ENCODE measurements at regions of chr6 and their contacts with region 1.

Region 1: DNA sequence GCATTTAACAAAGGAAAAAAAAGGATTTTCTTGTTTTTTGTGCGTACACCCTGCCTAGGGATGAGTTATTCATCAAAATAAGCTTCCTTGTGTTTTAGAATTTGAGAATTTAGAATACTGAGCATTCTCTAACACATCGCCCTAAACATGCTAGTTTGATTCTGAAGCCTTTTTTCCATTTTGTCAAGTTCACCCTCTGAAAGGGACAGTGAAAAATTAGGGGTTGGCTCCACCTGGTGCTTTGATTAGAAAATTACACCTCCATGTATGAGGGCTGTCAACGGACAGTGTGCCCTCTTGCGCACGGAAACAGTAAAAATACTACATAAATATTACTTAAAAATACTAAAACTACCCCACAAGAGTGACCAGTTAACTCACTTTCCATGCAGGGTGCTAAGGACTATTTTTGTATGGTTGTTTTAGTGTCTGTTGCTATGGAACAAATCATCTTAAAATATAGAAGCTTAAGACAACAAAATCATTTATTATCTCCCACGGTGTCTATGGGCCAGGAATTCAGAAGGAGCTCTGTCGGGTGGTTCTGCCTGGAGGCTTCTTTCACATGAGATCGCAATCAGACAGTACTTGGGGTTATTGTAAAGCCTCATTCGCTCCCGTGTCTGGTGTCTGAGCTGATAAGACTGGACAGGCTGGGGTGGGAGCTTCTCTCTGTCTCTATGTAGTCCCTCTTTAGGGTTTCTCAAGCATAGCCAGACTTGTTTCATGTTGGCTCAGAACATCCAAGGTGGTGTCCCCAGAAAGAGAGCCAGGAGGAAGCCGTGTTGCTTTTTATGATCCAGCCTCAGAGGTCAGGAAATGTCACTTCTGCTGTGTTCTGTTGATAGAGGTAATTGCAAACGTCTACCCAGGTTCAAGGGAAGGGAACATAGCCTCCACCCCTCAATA is 41.1 kb upstream of the TMEM170B start:
- DNase-seq: peak; percentile 55
- H3K4me3 Mint-ChIP-seq: no peak overlapping the region
- H3K27ac Mint-ChIP-seq: no peak overlapping the region
- H3K4me1 Mint-ChIP-seq: peaks cover 3% of the 10 kb centered on the region
- H3K27me3 Mint-ChIP-seq: no peaks in the 10 kb centered on the region

Region 2: DNA sequence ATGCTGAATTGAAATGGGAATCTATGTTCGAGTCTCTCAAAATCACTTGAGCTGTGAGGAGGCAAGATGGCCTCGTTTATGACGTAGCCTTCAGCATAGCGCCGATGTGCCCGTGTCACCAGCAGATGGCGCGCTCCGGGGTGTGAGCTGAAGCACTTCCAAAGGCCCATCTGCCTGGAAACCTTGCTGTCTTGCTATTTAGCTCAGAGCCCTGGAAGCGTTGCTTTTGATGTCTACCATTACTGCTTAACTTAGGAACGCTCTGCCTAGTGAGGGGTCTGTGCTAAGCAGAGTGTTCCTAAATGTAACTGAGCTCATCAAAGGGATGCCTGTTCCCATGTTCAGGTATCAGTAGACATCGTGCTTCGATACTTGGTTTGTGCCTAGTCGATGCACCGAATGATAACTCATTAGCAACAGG is 541.8 kb before region 1 on chr6:
- intact Hi-C with region 1: loop called (anchors 1 kb)
- DNase-seq: peak; percentile 51
- H3K4me3 Mint-ChIP-seq: no peak overlapping the region
- H3K27ac Mint-ChIP-seq: no peak overlapping the region
- H3K4me1 Mint-ChIP-seq: no peaks in the 10 kb centered on the region
- H3K27me3 Mint-ChIP-seq: peaks cover 10% of the 10 kb centered on the region

Region 3: GRCh38 chr6:11144393-11144851 is 352.0 kb before region 1 on chr6:
- intact Hi-C with region 1: loop called (anchors 1 kb)
- DNase-seq: peak; percentile 62
- H3K4me3 Mint-ChIP-seq: no peak overlapping the region
- H3K27ac Mint-ChIP-seq: no peak overlapping the region
- H3K4me1 Mint-ChIP-seq: peaks cover 12% of the 10 kb centered on the region
- H3K27me3 Mint-ChIP-seq: peaks cover 4% of the 10 kb centered on the region

Region 4: DNA sequence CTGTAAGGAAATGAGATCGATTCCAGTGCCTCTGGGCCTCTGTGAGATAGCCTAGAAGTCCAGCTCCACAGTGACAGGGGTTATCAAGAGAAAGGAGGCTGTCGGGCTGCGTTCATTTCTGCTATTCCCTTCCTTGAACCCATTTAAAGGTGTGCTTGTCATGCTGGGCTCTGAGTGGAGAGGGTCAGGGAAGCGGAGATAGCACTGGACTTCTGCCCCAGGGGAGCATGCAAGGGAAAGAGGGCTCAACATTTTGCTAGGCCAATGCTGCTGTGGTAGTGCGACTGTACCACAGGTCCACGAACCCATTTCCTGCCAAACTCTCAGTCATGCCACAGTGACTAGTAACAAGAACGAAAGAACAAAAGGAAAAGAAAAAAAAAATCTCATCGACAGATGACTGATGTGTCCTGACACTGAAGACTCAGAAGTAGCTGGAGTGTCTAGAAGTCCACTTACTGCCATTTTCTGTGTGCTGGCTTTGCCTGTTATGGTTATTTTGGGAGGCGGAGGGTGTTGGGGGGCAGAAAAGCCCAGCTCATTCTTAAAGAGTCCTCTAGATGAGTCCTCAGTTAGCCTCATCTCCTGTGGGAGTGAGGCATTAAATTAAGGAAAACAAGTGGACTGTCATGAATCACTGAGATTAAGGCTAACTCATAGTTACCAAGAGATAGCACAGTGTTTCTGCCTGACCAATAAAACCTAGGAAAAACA is 272.0 kb before region 1 on chr6:
- intact Hi-C with region 1: loop called (anchors 2 kb)
- DNase-seq: peak; percentile 51
- H3K4me3 Mint-ChIP-seq: peak overlapping the region; percentile 38
- H3K27ac Mint-ChIP-seq: peak overlapping the region; percentile 80
- H3K4me1 Mint-ChIP-seq: peaks cover 67% of the 10 kb centered on the region
- H3K27me3 Mint-ChIP-seq: no peaks in the 10 kb centered on the region

Region 5: DNA sequence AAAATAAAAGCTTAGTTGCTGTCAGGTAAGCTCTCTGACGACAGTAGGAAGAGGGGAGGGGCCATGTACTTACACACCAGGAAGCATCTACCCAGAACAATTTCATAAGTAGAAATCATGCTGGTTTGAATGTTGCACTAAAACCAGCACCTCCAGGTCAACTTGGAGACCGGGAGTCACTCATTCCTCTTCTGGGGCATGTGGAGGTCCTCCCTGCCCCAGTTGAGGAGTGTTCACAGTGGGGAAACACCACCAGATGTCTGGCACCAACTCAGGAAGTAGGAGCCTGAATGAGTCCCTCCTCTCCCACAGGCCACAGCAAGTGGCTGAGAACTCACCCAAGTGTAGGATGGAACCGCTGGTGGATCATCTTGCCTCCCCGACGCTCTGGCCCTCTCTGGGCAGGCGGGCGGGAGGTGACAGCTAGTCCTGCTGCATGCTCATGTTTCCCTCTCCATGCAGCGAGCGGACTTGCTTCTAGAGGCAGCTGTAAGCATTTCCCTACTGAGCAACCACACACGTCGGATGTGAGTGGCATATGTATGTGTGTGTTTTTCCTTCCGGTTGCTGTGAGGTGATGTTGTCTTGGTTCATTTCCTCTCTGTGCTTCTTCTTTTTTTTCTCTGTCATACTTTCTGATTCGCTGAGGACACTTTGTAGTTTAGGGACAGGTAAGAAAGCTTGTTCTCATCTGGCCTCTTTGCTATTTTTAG is 114.4 kb before region 1 on chr6:
- intact Hi-C with region 1: loop called (anchors 5 kb)
- DNase-seq: peak; percentile 71
- H3K4me3 Mint-ChIP-seq: peak overlapping the region; percentile 85
- H3K27ac Mint-ChIP-seq: peak overlapping the region; percentile 92
- H3K4me1 Mint-ChIP-seq: peaks cover 59% of the 10 kb centered on the region
- H3K27me3 Mint-ChIP-seq: no peaks in the 10 kb centered on the region

Region 6: DNA sequence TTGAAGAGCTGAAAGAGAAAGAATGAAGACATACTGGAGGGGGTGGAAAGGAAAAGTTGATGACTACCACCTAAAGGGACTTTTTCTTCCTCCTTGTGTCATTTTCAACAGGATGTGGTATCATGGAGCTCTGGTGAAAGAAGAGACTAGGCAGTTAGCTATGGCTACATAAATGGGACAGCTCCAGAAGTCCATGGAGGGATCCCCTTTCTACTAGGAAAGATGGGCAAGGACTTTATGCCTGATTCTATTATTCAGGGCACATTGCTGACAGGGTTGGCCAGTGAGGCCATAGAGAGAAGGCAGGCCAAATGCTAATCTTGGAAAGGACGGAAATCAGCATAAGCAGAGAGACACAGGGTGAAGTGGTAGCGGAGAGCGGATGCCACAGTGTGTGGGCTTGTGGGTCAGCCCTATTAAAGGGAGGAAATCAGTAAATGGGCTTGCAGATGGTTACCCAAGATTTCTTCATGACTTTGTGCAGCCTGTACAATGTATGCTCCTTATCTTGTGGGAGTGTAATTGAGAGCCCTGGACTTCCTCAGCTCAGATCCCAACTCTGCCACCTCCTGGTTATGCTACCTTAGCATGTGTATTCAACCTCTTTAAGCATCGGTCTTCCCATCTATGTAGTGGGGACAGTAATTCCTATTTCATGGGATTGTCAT is 36.3 kb before region 1 on chr6:
- intact Hi-C with region 1: no loop called
- DNase-seq: no peak
- H3K4me3 Mint-ChIP-seq: peak overlapping the region; percentile 67
- H3K27ac Mint-ChIP-seq: peak overlapping the region; percentile 91
- H3K4me1 Mint-ChIP-seq: peaks cover 29% of the 10 kb centered on the region
- H3K27me3 Mint-ChIP-seq: peaks cover 2% of the 10 kb centered on the region

Measured in activated T-helper 2 cell treated with anti-CD3 and anti-CD28 coated beads, Interferon-gamma antibody, Interleukin-2, Interleukin-4, amounts not matched to agents 10 μg/mL and 5 μg/mL and 100 μg/mL, durations not matched to agents 14 hours and 24 hours and 36 hours (primary cell).